Endothelial cell of umbilical vein (primary cell): ENCODE measurements at regions of chr14 and their contacts with region 1.

Region 1: DNA sequence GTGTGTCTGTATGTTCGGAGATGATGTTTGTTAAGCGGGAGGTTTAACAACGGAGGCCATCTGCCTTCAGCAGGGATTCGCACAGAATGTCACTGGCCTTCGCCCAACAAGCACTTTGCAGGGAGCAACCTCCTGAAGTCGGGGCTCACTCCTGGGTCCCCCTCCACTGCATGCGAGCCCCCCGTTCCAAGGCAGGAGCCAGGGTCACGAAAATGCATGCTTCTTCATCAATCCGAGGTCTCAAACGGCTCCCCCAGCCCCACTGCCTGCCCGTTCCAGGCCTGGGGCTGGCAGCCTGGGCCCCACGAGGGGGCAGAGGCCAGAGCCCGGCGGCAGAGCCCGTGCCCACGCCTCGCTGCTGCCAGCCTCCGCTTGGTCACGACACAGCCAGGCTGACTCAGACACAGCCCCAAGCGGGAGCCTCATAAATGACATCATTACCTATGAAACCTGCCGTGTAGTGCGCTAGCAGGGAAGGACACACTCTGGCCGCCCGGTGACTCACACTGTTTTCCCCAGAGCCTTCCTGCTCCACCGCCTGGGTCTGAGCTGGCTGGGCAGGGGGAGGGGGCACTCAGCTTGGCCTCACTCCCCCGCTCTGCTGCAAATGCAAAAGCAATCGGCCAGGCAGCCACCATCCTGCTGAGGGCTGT is 169.5 kb upstream of the RTL1 start:
- DNase-seq: peak; percentile 99
- H3K4me3 ChIP-seq: no peak overlapping the region
- H3K27ac ChIP-seq: peak overlapping the region; percentile 96
- H3K4me1 ChIP-seq: peaks cover 49% of the 10 kb centered on the region
- H3K27me3 ChIP-seq: no peaks in the 10 kb centered on the region
- CTCF ChIP-seq: peak in 1 of 2 donors; percentile 13
- POLR2A ChIP-seq: peak; percentile 22

Region 2: DNA sequence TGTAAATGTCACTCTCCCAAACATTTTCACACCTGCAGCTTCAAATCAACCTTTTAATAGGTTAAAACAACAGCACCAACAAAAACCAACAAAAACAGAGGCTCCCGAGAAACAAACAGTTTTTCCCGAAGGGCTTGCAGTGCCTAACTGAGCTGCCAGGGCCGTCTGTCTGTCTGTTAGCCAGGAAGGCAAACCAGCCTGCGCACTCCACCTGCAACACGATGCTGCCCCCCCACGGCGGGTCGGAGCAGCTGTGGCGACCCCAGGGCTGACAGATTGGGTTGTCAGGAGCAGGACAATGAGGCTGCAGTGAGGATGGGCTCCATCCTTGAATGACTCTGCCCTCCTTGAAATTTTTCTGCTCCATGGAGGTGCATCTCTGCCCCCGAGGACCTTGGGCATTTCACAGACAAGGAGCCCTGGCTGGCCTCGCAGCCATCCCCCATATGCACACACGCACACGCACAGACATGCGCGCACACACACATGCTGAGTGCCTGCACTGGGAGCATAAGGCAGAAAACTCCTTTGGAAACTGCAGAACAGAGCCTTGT is 172.2 kb before region 1 on chr14:
- CTCF ChIA-PET with region 1: interaction called, 3 read pairs
- POLR2A ChIA-PET with region 1: no interaction called
- dilution Hi-C with region 1: no loop called
- intact Hi-C with region 1: loop called (anchors 5 kb)
- DNase-seq: peak; percentile 8
- H3K4me3 ChIP-seq: no peak overlapping the region
- H3K27ac ChIP-seq: no peak overlapping the region
- H3K4me1 ChIP-seq: peaks cover 13% of the 10 kb centered on the region
- H3K27me3 ChIP-seq: peaks cover 3 to 6% of the 10 kb centered on the region in 2 experiments
- CTCF ChIP-seq: peak; percentile 8 to 42
- POLR2A ChIP-seq: no peak

Region 3: DNA sequence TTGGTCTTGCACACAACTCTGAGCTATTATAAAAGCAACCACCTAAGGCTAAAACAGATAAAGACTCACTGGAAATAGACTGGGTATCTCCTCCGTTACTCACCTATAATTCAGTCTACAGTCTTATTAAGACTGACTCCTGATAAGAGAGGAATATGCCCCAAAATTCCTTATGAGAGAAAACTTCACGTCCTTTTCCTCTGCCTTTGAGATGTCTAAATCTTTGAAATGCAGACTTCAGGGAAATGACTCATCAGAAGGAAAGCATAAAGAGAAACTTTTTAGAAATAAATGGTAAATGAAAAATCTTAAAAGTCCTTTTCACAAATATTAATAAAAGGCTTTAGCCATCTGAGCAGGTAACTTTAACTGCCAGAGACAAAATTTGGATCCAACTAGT is 17.9 kb after region 1 on chr14:
- CTCF ChIA-PET with region 1: interaction called, 7 read pairs
- POLR2A ChIA-PET with region 1: no interaction called
- dilution Hi-C with region 1: no loop called
- intact Hi-C with region 1: loop called (anchors 1 kb)
- DNase-seq: peak; percentile 69
- H3K4me3 ChIP-seq: no peak overlapping the region
- H3K27ac ChIP-seq: peak overlapping the region; percentile 65
- H3K4me1 ChIP-seq: peaks cover 11% of the 10 kb centered on the region
- H3K27me3 ChIP-seq: no peaks in the 10 kb centered on the region
- CTCF ChIP-seq: no peak
- POLR2A ChIP-seq: no peak

Region 4: DNA sequence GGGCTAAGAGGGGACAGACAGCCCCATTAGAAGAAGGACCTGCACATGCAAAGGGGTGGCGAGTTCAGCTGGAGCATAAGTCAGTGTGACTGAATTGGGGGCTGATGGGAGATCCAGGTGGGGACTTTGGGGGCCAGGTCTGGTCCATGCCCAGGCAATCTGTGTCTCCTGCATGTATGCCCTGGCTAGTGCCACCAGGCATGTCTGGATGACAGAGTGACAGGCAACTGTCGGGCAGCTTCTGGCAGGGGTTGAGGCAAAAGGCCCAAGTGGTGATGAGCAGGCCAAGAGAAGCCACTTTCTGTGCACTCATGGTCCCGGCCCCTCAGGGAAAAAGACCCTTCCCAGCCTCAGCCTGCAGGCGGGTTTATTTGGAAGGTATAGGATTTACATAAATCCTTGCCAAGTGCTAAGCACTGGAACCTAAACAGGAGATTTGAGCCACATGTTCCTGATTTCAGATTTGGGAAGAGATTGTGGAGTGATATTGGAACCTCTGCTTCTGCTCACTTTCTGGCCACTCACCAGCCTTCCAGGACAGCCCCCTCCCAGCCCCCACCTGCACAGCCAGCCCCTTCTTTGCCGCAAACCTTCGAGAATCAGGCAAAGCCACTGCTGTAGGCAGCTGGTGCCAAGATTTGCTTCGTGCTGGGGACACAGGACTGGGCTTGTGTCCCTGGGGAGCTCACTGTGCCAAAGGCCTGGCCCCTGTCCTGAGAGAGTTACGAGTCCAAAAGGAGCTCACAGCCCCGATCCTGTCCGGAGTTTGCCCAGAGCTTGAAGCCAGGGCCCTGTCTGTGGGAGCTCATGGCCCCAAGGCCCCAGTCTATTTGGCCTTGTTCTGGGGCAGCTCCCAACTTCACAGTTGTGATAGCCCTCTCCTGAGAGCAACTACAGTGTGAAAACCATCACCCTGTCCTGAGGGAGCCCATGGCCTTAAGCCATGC is 63.0 kb after region 1 on chr14:
- CTCF ChIA-PET with region 1: no interaction called
- POLR2A ChIA-PET with region 1: no interaction called
- dilution Hi-C with region 1: no loop called
- intact Hi-C with region 1: loop called (anchors 2 kb)
- DNase-seq: no peak
- H3K4me3 ChIP-seq: no peak overlapping the region
- H3K27ac ChIP-seq: no peak overlapping the region
- H3K4me1 ChIP-seq: peaks cover 14% of the 10 kb centered on the region
- H3K27me3 ChIP-seq: no peaks in the 10 kb centered on the region
- CTCF ChIP-seq: no peak
- POLR2A ChIP-seq: no peak

Region 5: GRCh38 chr14:101235335-101236103 is 162.4 kb after region 1 on chr14:
- CTCF ChIA-PET with region 1: interaction called, 11 read pairs
- POLR2A ChIA-PET with region 1: no interaction called
- dilution Hi-C with region 1: no loop called
- intact Hi-C with region 1: loop called (anchors 1 kb)
- DNase-seq: peak; percentile 55
- H3K4me3 ChIP-seq: no peak overlapping the region
- H3K27ac ChIP-seq: no peak overlapping the region
- H3K4me1 ChIP-seq: no peaks in the 10 kb centered on the region
- H3K27me3 ChIP-seq: no peaks in the 10 kb centered on the region
- CTCF ChIP-seq: peak; percentile 79 to 95
- POLR2A ChIP-seq: no peak